CD4-positive, alpha-beta memory T cell (primary cell): ENCODE measurements at regions of chr6 and their contacts with region 1.

Region 1: DNA sequence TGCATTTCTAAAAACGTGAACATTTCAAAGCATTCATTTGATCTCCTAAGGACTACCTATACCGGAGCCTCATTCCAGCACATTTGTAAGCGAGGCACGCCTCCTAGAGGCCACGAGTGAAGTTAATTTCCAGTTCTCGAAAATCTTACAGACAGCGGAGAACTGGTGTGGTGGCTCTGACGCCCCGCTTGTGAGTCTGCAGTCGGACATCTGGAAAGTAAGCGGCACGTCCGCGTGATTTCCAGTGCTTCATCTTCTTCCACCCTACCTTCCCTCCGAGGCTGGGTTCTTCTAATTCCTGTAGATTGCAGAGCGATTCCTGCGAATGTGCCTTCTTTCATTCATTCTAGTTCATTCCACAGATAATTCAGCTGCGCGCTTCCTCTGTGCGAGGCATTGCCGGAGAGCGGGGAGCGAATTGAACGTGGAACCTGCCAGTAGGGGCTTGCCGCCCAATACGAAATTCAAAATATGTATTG is 810 bp upstream of the PRIM2 start:
- DNase-seq: peak; percentile 83 to 85 (median 84)
- H3K4me3 ChIP-seq: peak overlapping the region; percentile 80 to 83
- H3K4me3 Mint-ChIP-seq: peak overlapping the region; percentile 95 to 100 (median 99)
- H3K27ac ChIP-seq: peak overlapping the region; percentile 61
- H3K27ac Mint-ChIP-seq: peak overlapping the region; percentile 82 to 97 (median 96)
- H3K4me1 ChIP-seq: peaks cover 18% of the 10 kb centered on the region
- H3K4me1 Mint-ChIP-seq: peaks cover 26 to 35% (median 30%) of the 10 kb centered on the region in 4 donors
- H3K27me3 ChIP-seq: no peaks in the 10 kb centered on the region
- H3K27me3 Mint-ChIP-seq: peaks cover 2% of the 10 kb centered on the region in 2 donors

Region 2: GRCh38 chr6:55388211-55388610 is 1928.4 kb before region 1 on chr6:
- CTCF ChIA-PET with region 1: no interaction called
- POLR2A ChIA-PET with region 1: no interaction called
- intact Hi-C with region 1: no loop called
- DNase-seq: no peak
- H3K4me3 ChIP-seq: no peak overlapping the region
- H3K4me3 Mint-ChIP-seq: no peak overlapping the region
- H3K27ac ChIP-seq: no peak overlapping the region
- H3K27ac Mint-ChIP-seq: no peak overlapping the region
- H3K4me1 ChIP-seq: no peaks in the 10 kb centered on the region
- H3K4me1 Mint-ChIP-seq: no peaks in the 10 kb centered on the region
- H3K27me3 ChIP-seq: no peaks in the 10 kb centered on the region
- H3K27me3 Mint-ChIP-seq: no peaks in the 10 kb centered on the region

Region 3: DNA sequence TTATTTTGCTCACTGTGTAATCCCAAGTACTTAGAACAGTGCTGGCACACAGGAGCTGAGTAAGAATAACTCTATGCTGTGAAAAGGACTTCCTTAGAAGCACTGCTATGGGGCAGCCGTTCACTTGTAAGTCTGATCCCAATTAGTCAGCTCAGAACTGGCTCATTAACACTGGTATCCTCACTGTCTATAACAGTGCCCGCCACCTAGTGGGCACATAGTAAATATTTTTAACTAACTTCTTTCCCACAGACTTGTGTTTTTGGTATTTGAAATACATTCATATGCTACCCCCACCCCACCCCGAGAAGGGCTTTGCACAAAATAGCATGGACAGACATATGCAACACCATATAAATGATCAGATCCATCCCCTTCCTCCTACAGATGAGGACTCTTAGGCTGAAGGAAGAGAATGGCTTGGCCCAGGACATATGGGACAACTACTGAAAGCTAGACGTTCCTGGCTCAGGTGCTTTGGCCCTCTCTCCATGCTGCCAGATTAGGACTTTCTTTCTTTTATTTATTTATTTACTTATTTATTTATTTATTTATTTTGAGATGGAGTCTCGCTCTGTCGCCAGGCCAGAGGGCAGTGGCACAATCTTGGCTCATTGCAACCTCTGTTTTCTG is 721.0 kb before region 1 on chr6:
- CTCF ChIA-PET with region 1: no interaction called
- POLR2A ChIA-PET with region 1: no interaction called
- intact Hi-C with region 1: loop called (anchors 5 kb)
- DNase-seq: peak in 4 of 5 donors; percentile 20 to 28 (median 24)
- H3K4me3 ChIP-seq: no peak overlapping the region
- H3K4me3 Mint-ChIP-seq: peak overlapping the region in 1 of 8 donors; percentile 2
- H3K27ac ChIP-seq: no peak overlapping the region
- H3K27ac Mint-ChIP-seq: peak overlapping the region in 1 of 7 donors; percentile 42
- H3K4me1 ChIP-seq: peaks cover 17% of the 10 kb centered on the region
- H3K4me1 Mint-ChIP-seq: peaks cover 13 to 25% (median 20%) of the 10 kb centered on the region in 4 donors
- H3K27me3 ChIP-seq: no peaks in the 10 kb centered on the region
- H3K27me3 Mint-ChIP-seq: no peaks in the 10 kb centered on the region

Region 4: GRCh38 chr6:56902641-56903464 is 413.8 kb before region 1 on chr6:
- CTCF ChIA-PET with region 1: interaction called, 333 read pairs
- POLR2A ChIA-PET with region 1: interaction called, 6 read pairs
- intact Hi-C with region 1: loop called (anchors 1 kb)
- DNase-seq: peak in 4 of 5 donors; percentile 14 to 33 (median 20)
- H3K4me3 ChIP-seq: no peak overlapping the region
- H3K4me3 Mint-ChIP-seq: peak overlapping the region in 1 of 8 donors; percentile 18
- H3K27ac ChIP-seq: no peak overlapping the region
- H3K27ac Mint-ChIP-seq: peak overlapping the region in 1 of 7 donors; percentile 63
- H3K4me1 ChIP-seq: no peaks in the 10 kb centered on the region
- H3K4me1 Mint-ChIP-seq: peaks cover 0 to 3% (median 0%) of the 10 kb centered on the region in 4 donors
- H3K27me3 ChIP-seq: no peaks in the 10 kb centered on the region
- H3K27me3 Mint-ChIP-seq: peaks cover 1 to 5% of the 10 kb centered on the region in 2 donors

Region 5: DNA sequence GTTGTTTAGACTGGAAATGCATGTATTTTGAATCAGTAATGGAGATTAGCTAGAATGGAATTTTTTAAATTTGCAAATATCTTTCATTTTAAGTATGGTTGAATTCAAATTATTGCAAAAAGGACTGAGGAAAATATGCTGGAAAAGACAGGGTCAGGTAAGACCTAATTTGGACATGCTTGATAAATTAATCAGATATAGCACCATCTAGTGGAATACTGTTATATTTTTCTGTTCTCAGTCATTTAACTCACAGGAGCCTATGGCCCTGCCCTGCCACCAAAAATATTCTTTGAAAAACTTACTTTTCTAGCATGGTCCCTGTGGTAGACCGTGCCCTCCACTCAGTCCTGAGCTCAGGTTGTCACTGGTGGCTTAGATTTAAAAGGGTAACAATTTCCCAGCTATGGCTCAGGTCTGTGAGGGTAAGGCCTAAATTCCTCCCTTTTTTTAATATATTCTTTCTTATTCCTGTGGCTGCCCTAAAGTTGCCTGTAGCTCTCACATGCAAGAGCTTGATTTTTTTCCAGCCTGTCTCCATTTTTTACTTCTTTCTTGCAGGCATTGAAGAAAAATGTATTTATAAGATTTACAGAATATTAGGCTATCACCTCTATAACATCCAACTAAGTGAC is 295.4 kb before region 1 on chr6:
- CTCF ChIA-PET with region 1: interaction called, 4 read pairs
- POLR2A ChIA-PET with region 1: no interaction called
- intact Hi-C with region 1: loop called (anchors 2 kb)
- DNase-seq: peak in 4 of 5 donors; percentile 9 to 22 (median 12)
- H3K4me3 ChIP-seq: no peak overlapping the region
- H3K4me3 Mint-ChIP-seq: no peak overlapping the region
- H3K27ac ChIP-seq: no peak overlapping the region
- H3K27ac Mint-ChIP-seq: no peak overlapping the region
- H3K4me1 ChIP-seq: no peaks in the 10 kb centered on the region
- H3K4me1 Mint-ChIP-seq: no peaks in the 10 kb centered on the region
- H3K27me3 ChIP-seq: peaks cover 3% of the 10 kb centered on the region
- H3K27me3 Mint-ChIP-seq: peaks cover 6 to 9% of the 10 kb centered on the region in 2 donors

Region 6: GRCh38 chr6:57089687-57090460 is 226.7 kb before region 1 on chr6 and contains the start of gene ZNF451:
- CTCF ChIA-PET with region 1: interaction called, 4 read pairs
- POLR2A ChIA-PET with region 1: no interaction called
- intact Hi-C with region 1: loop called (anchors 1 kb)
- DNase-seq: peak; percentile 93 to 97 (median 94)
- H3K4me3 ChIP-seq: peak within 1 kb of the TSS; percentile 31 to 60
- H3K4me3 Mint-ChIP-seq: peak within 1 kb of the TSS; percentile 85 to 92 (median 90)
- H3K27ac ChIP-seq: peak within 1 kb of the TSS; percentile 60
- H3K27ac Mint-ChIP-seq: peak within 1 kb of the TSS; percentile 85 to 95 (median 92)
- H3K4me1 ChIP-seq: peaks cover 35% of the 10 kb centered on the region
- H3K4me1 Mint-ChIP-seq: peaks cover 22 to 38% (median 30%) of the 10 kb centered on the region in 4 donors
- H3K27me3 ChIP-seq: no peaks in the 10 kb centered on the region
- H3K27me3 Mint-ChIP-seq: no peaks in the 10 kb centered on the region
- total RNA-seq, gene ZNF451: 83.0 to 97.7 TPM

Region 7: DNA sequence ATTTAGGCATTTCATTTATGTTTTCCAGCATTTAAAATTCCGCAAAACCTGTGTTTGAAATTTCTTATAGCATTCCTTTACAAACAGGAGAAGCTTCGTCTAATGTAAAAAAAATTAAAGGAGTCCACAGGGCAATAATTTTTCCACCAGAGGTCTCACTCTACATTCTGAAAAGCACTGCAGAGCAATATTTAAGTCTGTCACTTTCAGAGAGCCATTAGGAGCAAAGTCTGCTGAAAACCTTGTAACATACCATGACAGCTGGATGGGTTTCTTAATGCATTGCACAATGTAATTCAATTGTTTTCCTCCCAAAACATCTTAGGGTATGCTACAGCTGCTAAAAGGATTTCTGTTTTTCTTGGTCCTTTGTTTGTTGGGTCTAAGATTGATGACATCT is 126.5 kb before region 1 on chr6:
- CTCF ChIA-PET with region 1: interaction called, 11 read pairs
- POLR2A ChIA-PET with region 1: no interaction called
- intact Hi-C with region 1: loop called (anchors 1 kb)
- DNase-seq: no peak
- H3K4me3 ChIP-seq: no peak overlapping the region
- H3K4me3 Mint-ChIP-seq: no peak overlapping the region
- H3K27ac ChIP-seq: no peak overlapping the region
- H3K27ac Mint-ChIP-seq: no peak overlapping the region
- H3K4me1 ChIP-seq: no peaks in the 10 kb centered on the region
- H3K4me1 Mint-ChIP-seq: peaks cover 0 to 2% (median 0%) of the 10 kb centered on the region in 4 donors
- H3K27me3 ChIP-seq: no peaks in the 10 kb centered on the region
- H3K27me3 Mint-ChIP-seq: no peaks in the 10 kb centered on the region

Region 8: GRCh38 chr6:57267586-57268293 is 48.9 kb before region 1 on chr6:
- CTCF ChIA-PET with region 1: interaction called, 22 read pairs
- POLR2A ChIA-PET with region 1: no interaction called
- intact Hi-C with region 1: loop called (anchors 1 kb)
- DNase-seq: peak in 4 of 5 donors; percentile 27 to 36 (median 30)
- H3K4me3 ChIP-seq: no peak overlapping the region
- H3K4me3 Mint-ChIP-seq: no peak overlapping the region
- H3K27ac ChIP-seq: no peak overlapping the region
- H3K27ac Mint-ChIP-seq: no peak overlapping the region
- H3K4me1 ChIP-seq: no peaks in the 10 kb centered on the region
- H3K4me1 Mint-ChIP-seq: peaks cover 0 to 3% (median 0%) of the 10 kb centered on the region in 4 donors
- H3K27me3 ChIP-seq: no peaks in the 10 kb centered on the region
- H3K27me3 Mint-ChIP-seq: peaks cover 10% of the 10 kb centered on the region in 2 donors